Vagina (tissue), 2 donors: ENCODE measurements at regions of chr12 and their contacts with region 1.

Region 1: DNA sequence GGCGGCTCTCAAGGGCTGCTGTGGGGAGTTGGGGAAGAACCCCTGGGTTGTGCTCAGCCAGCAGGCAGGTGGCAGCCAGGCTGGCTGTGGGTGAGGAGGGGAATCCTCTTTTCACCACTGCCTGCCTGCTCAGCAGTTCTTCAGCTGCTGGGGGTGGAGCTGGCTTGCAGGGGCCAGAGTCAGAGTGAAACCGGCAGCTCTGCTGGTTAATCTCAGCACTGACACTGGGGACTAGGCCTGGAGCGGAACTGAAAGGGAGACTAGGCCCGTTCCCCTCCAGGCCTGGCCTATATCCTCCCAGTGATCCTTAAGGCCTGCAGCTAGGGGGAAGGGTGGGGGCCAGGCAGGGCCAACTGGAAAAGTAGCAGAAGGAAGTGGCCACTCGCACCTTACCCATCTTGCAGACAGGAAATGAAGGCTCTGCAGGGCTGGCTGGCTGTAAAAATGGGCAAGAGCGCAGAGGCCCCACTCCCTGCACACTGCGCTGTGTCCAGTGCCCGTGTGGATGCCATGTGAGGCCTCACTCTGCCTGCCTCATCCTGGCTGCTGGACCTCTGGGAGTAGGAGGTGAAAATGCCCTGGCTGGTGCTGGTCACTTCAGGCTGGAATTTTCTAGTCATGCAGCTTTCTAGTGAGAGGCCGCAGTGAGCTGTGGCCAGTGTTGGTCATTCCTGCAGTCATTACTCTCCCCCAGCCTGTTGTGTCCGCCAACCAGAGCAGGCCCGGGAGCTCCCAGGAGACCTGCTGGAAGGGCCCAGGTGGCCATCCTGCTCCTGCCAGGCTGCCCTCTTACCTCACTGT is 39.4 kb downstream of the SH2B3 start:
- DNase-seq: peak; percentile 83 to 95
- H3K4me3 ChIP-seq: no peak overlapping the region
- H3K27ac ChIP-seq: peak overlapping the region; percentile 31
- H3K4me1 ChIP-seq: peaks cover 70% of the 10 kb centered on the region
- H3K27me3 ChIP-seq: no peaks in the 10 kb centered on the region
- CTCF ChIP-seq: no peak
- POLR2A ChIP-seq: no peak

Region 2: GRCh38 chr12:111404362-111405148 is 40.6 kb before region 1 on chr12:
- intact Hi-C with region 1: loop called (anchors 5 kb)
- DNase-seq: no peak
- H3K4me3 ChIP-seq: peak overlapping the region; percentile 72 to 87
- H3K27ac ChIP-seq: peak overlapping the region; percentile 83
- H3K4me1 ChIP-seq: peaks cover 64% of the 10 kb centered on the region
- H3K27me3 ChIP-seq: no peaks in the 10 kb centered on the region
- CTCF ChIP-seq: no peak
- POLR2A ChIP-seq: no peak

Region 3: DNA sequence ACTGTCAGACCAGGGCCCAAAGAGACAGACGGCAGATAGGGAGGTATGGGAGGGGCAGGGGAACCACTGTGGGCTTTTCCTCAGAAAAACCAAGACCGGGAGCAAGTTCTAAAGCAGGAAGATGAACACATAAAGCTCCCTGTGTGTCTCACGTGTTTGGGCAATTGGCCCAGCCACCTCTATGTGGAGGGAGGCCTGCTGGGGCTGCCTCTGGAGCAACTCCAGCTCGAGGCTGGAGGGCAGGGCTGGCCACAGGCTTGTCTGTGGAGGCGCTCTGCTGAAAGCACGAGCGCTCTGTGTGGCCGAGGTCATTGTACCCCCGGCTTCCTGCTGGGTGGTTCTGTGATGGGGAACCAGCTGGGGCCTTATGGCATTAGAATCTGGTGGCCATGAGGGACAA is 716.6 kb after region 1 on chr12:
- intact Hi-C with region 1: no loop called
- DNase-seq: no peak
- H3K4me3 ChIP-seq: no peak overlapping the region
- H3K27ac ChIP-seq: no peak overlapping the region
- H3K4me1 ChIP-seq: no peaks in the 10 kb centered on the region
- H3K27me3 ChIP-seq: no peaks in the 10 kb centered on the region
- CTCF ChIP-seq: no peak
- POLR2A ChIP-seq: no peak